ENCODE measurements at regions of chr5 and their contacts with region 1.

Region 1: DNA sequence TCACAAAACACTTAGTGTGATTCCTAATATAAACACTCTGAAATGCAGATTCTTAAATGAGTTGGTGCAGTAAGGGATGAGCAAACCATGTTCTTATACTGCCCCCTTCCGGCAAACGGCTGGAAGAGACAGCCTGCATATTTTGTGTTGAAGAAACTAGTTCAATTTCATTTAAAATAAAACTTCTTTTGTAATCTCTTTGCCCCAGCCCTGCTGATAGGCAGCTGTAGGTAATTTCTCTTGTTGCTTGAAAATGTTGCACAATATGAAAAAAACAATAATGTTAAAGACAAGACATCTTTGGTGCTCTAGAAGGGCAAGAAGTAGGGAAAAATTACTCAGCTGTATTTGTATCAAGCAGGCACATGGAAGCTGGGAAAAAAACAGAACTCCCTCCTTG is 89.7 kb upstream of the CCNG1 start:
- DNase-seq: peak in 1 of 2 experiments; percentile 71
- H3K4me3 ChIP-seq: no peak overlapping the region
- H3K4me3 Mint-ChIP-seq: no peak overlapping the region
- H3K27ac Mint-ChIP-seq: no peak overlapping the region
- H3K4me1 ChIP-seq: no peaks in the 10 kb centered on the region
- H3K4me1 Mint-ChIP-seq: no peaks in the 10 kb centered on the region
- H3K27me3 ChIP-seq: no peaks in the 10 kb centered on the region
- H3K27me3 Mint-ChIP-seq: no peaks in the 10 kb centered on the region
- CTCF ChIP-seq: peak; percentile 75 to 82

Region 2: GRCh38 chr5:161966564-161966963 is 1381.1 kb before region 1 on chr5:
- CTCF ChIA-PET with region 1: no interaction called
- POLR2A ChIA-PET with region 1: no interaction called
- intact Hi-C with region 1: loop called (anchors 5 kb)
- DNase-seq: peak in 1 of 2 experiments; percentile 11
- H3K4me3 ChIP-seq: no peak overlapping the region
- H3K4me3 Mint-ChIP-seq: no peak overlapping the region
- H3K27ac Mint-ChIP-seq: no peak overlapping the region
- H3K4me1 ChIP-seq: no peaks in the 10 kb centered on the region
- H3K4me1 Mint-ChIP-seq: no peaks in the 10 kb centered on the region
- H3K27me3 ChIP-seq: no peaks in the 10 kb centered on the region
- H3K27me3 Mint-ChIP-seq: no peaks in the 10 kb centered on the region
- CTCF ChIP-seq: peak; percentile 21 to 59

Region 3: GRCh38 chr5:162209005-162209605 is 1138.6 kb before region 1 on chr5:
- CTCF ChIA-PET with region 1: no interaction called
- POLR2A ChIA-PET with region 1: no interaction called
- intact Hi-C with region 1: loop called (anchors 1 kb)
- DNase-seq: peak; percentile 66 to 69
- H3K4me3 ChIP-seq: no peak overlapping the region
- H3K4me3 Mint-ChIP-seq: no peak overlapping the region
- H3K27ac Mint-ChIP-seq: no peak overlapping the region
- H3K4me1 ChIP-seq: no peaks in the 10 kb centered on the region
- H3K4me1 Mint-ChIP-seq: no peaks in the 10 kb centered on the region
- H3K27me3 ChIP-seq: no peaks in the 10 kb centered on the region; the same call in 1 of the 2 replicates
- H3K27me3 Mint-ChIP-seq: peaks cover 6% of the 10 kb centered on the region
- CTCF ChIP-seq: peak; percentile 55 to 74

Region 4: GRCh38 chr5:162593881-162594280 is 753.8 kb before region 1 on chr5:
- CTCF ChIA-PET with region 1: no interaction called
- POLR2A ChIA-PET with region 1: no interaction called
- intact Hi-C with region 1: loop called (anchors 1 kb)
- DNase-seq: peak in 1 of 2 experiments; percentile 6
- H3K4me3 ChIP-seq: no peak overlapping the region
- H3K4me3 Mint-ChIP-seq: no peak overlapping the region
- H3K27ac Mint-ChIP-seq: no peak overlapping the region
- H3K4me1 ChIP-seq: no peaks in the 10 kb centered on the region
- H3K4me1 Mint-ChIP-seq: no peaks in the 10 kb centered on the region
- H3K27me3 ChIP-seq: no peaks in the 10 kb centered on the region
- H3K27me3 Mint-ChIP-seq: no peaks in the 10 kb centered on the region
- CTCF ChIP-seq: peak; percentile 37 to 63

Region 5: DNA sequence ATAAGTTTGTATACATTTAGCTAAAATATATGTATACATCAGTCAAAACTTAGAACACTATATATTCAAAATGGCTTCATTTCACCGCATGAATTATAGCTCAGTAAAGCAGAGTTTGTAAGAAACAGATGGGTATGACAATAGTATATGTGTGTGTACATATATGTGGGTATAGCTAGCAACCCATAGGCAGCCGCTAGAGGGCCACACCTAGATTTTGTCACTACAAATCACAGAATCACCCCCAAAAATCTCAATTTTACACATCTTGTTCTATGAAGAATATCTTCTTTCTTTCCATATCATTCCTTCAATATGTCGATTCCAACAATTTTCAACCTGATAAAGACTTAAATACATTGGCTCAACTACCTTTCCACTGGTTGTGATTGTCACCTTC is 268.1 kb before region 1 on chr5:
- CTCF ChIA-PET with region 1: interaction called, 3 read pairs
- POLR2A ChIA-PET with region 1: no interaction called
- intact Hi-C with region 1: loop called (anchors 1 kb)
- DNase-seq: peak in 1 of 2 experiments; percentile 24
- H3K4me3 ChIP-seq: no peak overlapping the region
- H3K4me3 Mint-ChIP-seq: no peak overlapping the region
- H3K27ac Mint-ChIP-seq: no peak overlapping the region
- H3K4me1 ChIP-seq: no peaks in the 10 kb centered on the region
- H3K4me1 Mint-ChIP-seq: no peaks in the 10 kb centered on the region
- H3K27me3 ChIP-seq: no peaks in the 10 kb centered on the region
- H3K27me3 Mint-ChIP-seq: no peaks in the 10 kb centered on the region
- CTCF ChIP-seq: peak; percentile 45 to 51

Region 6: GRCh38 chr5:163104464-163104863 is 243.2 kb before region 1 on chr5:
- CTCF ChIA-PET with region 1: no interaction called
- POLR2A ChIA-PET with region 1: no interaction called
- intact Hi-C with region 1: loop called (anchors 1 kb)
- DNase-seq: peak in 1 of 2 experiments; percentile 18
- H3K4me3 ChIP-seq: no peak overlapping the region
- H3K4me3 Mint-ChIP-seq: no peak overlapping the region
- H3K27ac Mint-ChIP-seq: no peak overlapping the region
- H3K4me1 ChIP-seq: no peaks in the 10 kb centered on the region
- H3K4me1 Mint-ChIP-seq: no peaks in the 10 kb centered on the region
- H3K27me3 ChIP-seq: no peaks in the 10 kb centered on the region
- H3K27me3 Mint-ChIP-seq: peaks cover 5% of the 10 kb centered on the region
- CTCF ChIP-seq: peak; percentile 18 to 27

Region 7: GRCh38 chr5:163306421-163306820 is 41.2 kb before region 1 on chr5:
- CTCF ChIA-PET with region 1: no interaction called
- POLR2A ChIA-PET with region 1: no interaction called
- intact Hi-C with region 1: loop called (anchors 1 kb)
- DNase-seq: peak in 1 of 2 experiments; percentile 17
- H3K4me3 ChIP-seq: no peak overlapping the region
- H3K4me3 Mint-ChIP-seq: no peak overlapping the region
- H3K27ac Mint-ChIP-seq: no peak overlapping the region
- H3K4me1 ChIP-seq: no peaks in the 10 kb centered on the region
- H3K4me1 Mint-ChIP-seq: no peaks in the 10 kb centered on the region
- H3K27me3 ChIP-seq: no peaks in the 10 kb centered on the region
- H3K27me3 Mint-ChIP-seq: peaks cover 6% of the 10 kb centered on the region
- CTCF ChIP-seq: peak; percentile 21 to 46